Common myeloid progenitor, CD34-positive (primary cell): ENCODE measurements at regions of chr6 and their contacts with region 1.

Region 1: DNA sequence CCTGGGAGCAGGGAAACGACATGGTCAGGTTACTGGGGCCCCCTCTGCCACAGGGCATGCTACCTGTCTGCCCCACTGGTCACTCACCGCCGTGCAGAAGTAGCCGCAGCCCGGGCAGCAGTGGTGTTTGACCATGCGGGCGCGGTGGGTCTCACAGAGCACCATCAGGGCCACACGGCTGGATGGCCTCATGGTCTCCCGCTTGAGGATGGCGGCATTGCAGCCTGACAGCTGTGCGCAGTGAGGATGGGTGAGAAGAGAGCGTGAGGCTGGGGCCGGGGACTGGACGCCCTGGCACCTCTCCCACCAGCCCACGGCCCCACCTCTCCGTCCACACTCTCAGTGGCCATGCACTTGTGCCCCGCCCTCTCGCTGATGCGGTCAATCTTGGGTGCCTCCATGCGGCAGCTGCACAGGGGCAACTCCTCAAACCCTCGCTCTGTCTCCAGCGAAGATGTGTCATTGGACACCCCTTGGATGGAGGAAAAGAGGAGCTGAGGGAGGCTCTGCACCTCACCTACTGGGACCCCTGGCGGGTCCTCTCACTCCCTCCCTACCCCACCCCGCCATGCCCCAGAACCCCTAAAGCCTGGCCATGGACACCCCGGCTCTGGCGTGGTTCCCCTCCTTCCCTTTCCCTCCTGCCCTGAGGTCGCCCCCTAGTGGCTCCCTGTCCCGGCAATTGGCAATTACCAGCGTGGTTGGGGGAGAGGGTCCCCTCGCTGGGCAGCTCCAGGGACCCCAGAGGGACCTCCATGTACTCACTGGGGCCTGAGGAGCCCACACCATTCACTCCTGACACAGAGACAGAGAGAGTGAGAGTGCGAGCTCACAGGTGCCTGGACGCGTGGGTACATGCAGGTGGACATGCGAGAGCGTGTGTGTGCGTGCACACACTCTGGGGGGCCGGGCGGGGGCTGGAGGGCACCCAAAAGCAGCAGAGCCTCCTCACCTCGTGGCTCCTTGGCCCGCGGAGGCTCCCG is 8.9 kb downstream of the EHMT2 start:
- DNase-seq: peak; percentile 26 to 62 (median 46)
- H3K4me3 ChIP-seq: no peak overlapping the region
- H3K27ac ChIP-seq: no peak overlapping the region
- H3K4me1 ChIP-seq: peaks cover 0 to 14% (median 0%) of the 10 kb centered on the region in 4 experiments
- H3K27me3 ChIP-seq: no peaks in the 10 kb centered on the region

Region 2: GRCh38 chr6:31870385-31870921 is 18.1 kb before region 1 on chr6:
- CTCF ChIA-PET with region 1: interaction called, 14 read pairs
- POLR2A ChIA-PET with region 1: no interaction called
- DNase-seq: peak in 1 of 3 donors; percentile 14
- H3K4me3 ChIP-seq: no peak overlapping the region
- H3K27ac ChIP-seq: no peak overlapping the region
- H3K4me1 ChIP-seq: no peaks in the 10 kb centered on the region
- H3K27me3 ChIP-seq: peaks cover 0 to 3% (median 0%) of the 10 kb centered on the region in 5 experiments

Region 3: DNA sequence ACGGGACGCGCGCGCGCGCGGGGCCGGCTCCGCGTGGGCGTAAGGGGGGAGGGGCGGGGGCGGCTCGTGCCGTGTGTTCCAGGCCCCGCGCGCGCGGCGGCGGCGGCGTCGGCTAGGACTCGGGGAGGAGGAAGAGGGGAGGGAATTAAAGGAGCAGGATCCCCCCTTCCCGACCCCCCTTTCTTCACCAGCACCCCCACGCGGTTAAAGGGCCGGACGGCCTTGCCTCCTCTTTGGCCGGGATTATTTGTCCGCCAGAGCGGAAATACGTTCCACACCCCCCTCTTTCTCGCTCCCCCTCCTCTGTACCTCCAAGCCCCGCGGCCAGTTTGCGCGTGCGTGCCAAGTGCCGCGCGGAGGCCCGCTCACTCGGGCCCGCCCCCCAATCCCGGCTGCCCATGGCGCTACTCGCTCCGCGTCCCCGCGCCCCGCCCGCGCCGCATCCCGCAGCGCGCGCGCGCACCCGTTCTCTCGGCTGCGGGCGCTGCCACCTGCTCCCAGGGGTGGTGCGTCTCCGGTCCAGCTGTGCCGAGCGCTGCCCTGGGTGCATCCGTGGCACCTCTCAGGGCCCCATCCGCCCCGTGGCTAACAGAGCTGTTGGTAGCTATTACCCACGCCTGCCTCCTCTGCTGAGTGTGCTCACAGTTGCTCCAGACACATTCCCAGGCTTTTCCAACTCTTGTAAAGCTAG is 13.5 kb after region 1 on chr6 and contains the start of gene ZBTB12:
- CTCF ChIA-PET with region 1: interaction called, 14 read pairs
- POLR2A ChIA-PET with region 1: no interaction called
- DNase-seq: peak; percentile 91 to 97 (median 96)
- H3K4me3 ChIP-seq: peak within 1 kb of the TSS; percentile 50 to 84 (median 75)
- H3K27ac ChIP-seq: peak within 1 kb of the TSS; percentile 40 to 77
- H3K4me1 ChIP-seq: peaks cover 4 to 44% (median 34%) of the 10 kb centered on the region in 4 experiments
- H3K27me3 ChIP-seq: no peaks in the 10 kb centered on the region

Region 4: GRCh38 chr6:31922942-31923341 is 34.4 kb after region 1 on chr6:
- CTCF ChIA-PET with region 1: interaction called, 21 read pairs
- POLR2A ChIA-PET with region 1: no interaction called
- DNase-seq: peak; percentile 50 to 59 (median 58)
- H3K4me3 ChIP-seq: no peak overlapping the region
- H3K27ac ChIP-seq: no peak overlapping the region
- H3K4me1 ChIP-seq: no peaks in the 10 kb centered on the region
- H3K27me3 ChIP-seq: no peaks in the 10 kb centered on the region

Region 5: GRCh38 chr6:31952140-31952805 is 63.7 kb after region 1 on chr6:
- CTCF ChIA-PET with region 1: interaction called, 16 read pairs
- POLR2A ChIA-PET with region 1: no interaction called
- DNase-seq: peak in 2 of 3 donors; percentile 39 to 47
- H3K4me3 ChIP-seq: no peak overlapping the region
- H3K27ac ChIP-seq: no peak overlapping the region
- H3K4me1 ChIP-seq: no peaks in the 10 kb centered on the region
- H3K27me3 ChIP-seq: no peaks in the 10 kb centered on the region